ENCODE measurements at regions of chr17 and their contacts with region 1.

Region 1: GRCh38 chr17:67824735-67825626 is at the start of gene BPTF:
- DNase-seq: peak; percentile 97
- H3K4me3 ChIP-seq: peak within 1 kb of the TSS; percentile 64 to 87 (median 74)
- H3K27ac ChIP-seq: peak within 1 kb of the TSS; percentile 92 to 99 (median 97)
- H3K4me1 ChIP-seq: peaks cover 26 to 44% (median 38%) of the 10 kb centered on the region in 4 donors
- H3K27me3 ChIP-seq: no peaks in the 10 kb centered on the region
- CTCF ChIP-seq: peak; percentile 92 to 96 (median 93)
- EP300 ChIP-seq: no peak
- POLR2A ChIP-seq: no peak
- total RNA-seq, gene BPTF: 60.3 to 77.7 (median 74.2) TPM

Region 2: GRCh38 chr17:67366193-67367157 is 458.5 kb before region 1 on chr17 and contains the start of gene PSMD12:
- intact Hi-C with region 1: loop called (anchors 5 kb)
- DNase-seq: peak; percentile 98
- H3K4me3 ChIP-seq: peak within 1 kb of the TSS; percentile 77 to 97 (median 92)
- H3K27ac ChIP-seq: peak within 1 kb of the TSS; percentile 92 to 96 (median 94)
- H3K4me1 ChIP-seq: peaks cover 37 to 49% (median 48%) of the 10 kb centered on the region in 4 donors
- H3K27me3 ChIP-seq: no peaks in the 10 kb centered on the region
- CTCF ChIP-seq: no peak
- EP300 ChIP-seq: no peak
- POLR2A ChIP-seq: peak; percentile 67
- total RNA-seq, gene PSMD12: 28.4 to 37.8 (median 30.0) TPM

Region 3: DNA sequence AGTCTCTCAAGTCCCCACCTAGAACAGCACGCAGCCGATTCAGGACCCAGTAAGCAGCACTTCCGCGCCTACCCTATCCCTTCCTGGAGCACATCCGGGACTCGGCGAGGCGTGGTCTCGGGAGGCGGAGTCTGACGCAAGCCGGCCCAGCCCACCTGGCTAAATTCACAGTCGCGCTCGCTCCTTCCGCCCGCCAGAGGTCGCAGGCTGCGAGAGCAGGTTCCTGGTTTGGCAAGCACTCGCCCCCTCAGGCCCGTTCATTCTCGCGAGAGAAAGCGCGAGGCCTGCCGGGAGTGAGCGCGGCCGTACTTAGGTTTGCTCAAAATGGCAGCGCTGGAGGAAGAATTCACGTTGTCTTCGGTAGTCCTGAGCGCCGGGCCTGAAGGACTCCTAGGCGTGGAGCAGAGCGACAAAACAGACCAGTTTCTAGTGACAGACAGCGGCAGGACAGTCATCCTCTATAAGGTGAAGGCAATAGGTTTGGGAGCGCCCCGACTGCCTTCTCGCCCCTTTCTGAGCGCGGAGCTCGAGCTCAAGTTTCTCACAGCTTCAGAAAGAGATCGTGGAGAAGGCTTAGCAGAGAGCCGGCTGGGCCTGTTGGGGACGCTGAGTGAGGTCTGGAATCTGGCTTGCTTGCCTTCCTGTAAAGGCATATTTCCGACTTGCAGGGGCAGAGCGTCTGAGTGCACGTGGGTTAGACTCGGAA is 107.2 kb before region 1 on chr17 and contains the start of gene NOL11:
- intact Hi-C with region 1: loop called (anchors 5 kb)
- DNase-seq: peak; percentile 99
- H3K4me3 ChIP-seq: peak within 1 kb of the TSS; percentile 74 to 95 (median 86)
- H3K27ac ChIP-seq: peak within 1 kb of the TSS; percentile 78 to 90 (median 86)
- H3K4me1 ChIP-seq: peaks cover 19 to 29% (median 25%) of the 10 kb centered on the region in 4 donors
- H3K27me3 ChIP-seq: no peaks in the 10 kb centered on the region
- CTCF ChIP-seq: peak; percentile 83 to 97 (median 95)
- EP300 ChIP-seq: no peak
- POLR2A ChIP-seq: no peak
- total RNA-seq, gene NOL11: 16.0 to 23.3 (median 21.3) TPM

Region 4: DNA sequence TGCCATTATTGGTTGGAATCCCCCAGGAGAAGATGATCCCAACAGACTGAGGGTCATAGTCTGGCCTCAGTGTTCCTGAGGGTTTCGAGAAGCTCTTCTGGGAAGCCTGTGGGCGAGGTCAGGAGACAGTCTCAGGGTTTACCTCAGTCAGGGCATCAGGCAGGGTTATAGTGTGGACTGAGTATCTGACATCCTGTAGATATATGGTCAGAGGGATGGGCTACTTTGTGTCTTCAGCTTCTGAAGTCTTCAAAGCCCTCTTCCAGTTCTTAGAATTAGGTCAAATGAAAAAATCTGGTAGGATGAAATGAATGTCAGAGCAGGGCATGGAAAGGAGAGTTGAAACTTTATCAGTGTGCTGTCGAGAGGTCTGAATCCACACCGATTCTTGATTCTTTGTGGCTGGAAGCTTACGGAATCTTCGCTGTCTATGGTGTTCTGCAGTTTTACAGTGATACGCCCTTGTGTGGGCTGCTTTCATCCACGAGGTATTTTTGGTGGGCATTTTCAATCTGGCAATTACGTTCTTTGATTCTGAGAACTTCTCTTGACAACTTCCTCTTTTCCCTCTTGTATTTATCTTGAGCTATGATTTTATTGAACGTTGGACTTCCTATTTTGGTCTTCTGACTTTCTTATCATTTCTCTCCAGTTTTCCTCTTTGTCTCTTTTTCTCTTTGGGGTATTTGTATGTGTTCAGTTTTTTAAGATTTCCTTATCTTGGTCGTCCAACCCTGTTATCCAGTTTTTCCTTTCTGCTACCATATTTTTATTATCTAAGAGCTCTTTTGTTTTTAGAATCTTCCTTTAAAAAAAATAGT is 30.7 kb after region 1 on chr17:
- intact Hi-C with region 1: no loop called
- DNase-seq: no peak
- H3K4me3 ChIP-seq: no peak overlapping the region
- H3K27ac ChIP-seq: no peak overlapping the region
- H3K4me1 ChIP-seq: peaks cover 37 to 66% (median 54%) of the 10 kb centered on the region in 4 donors
- H3K27me3 ChIP-seq: no peaks in the 10 kb centered on the region
- CTCF ChIP-seq: no peak
- EP300 ChIP-seq: no peak
- POLR2A ChIP-seq: no peak